SK-N-SH (cell line): ENCODE measurements at regions of chr3 and their contacts with region 1.

Region 1: GRCh38 chr3:137013955-137014688 is 56.3 kb downstream of the IL20RB start:
- DNase-seq: peak; percentile 84
- H3K4me3 ChIP-seq: peak overlapping the region in 1 of 2 experiments; percentile 42; a peak in 2 of 4 replicates
- H3K27ac ChIP-seq: no peak overlapping the region
- H3K4me1 ChIP-seq: peaks cover 5 to 7% of the 10 kb centered on the region in 2 experiments; a peak in 2 of 4 replicates
- H3K27me3 ChIP-seq: no peaks in the 10 kb centered on the region
- CTCF ChIP-seq: peak; percentile 86
- EP300 ChIP-seq: no peak
- RAD21 ChIP-seq: peak; percentile 99

Region 2: GRCh38 chr3:136075218-136075808 is 938.8 kb before region 1 on chr3:
- CTCF ChIA-PET with region 1: interaction called, 28 read pairs
- POLR2A ChIA-PET with region 1: no interaction called
- DNase-seq: peak; percentile 53
- H3K4me3 ChIP-seq: no peak overlapping the region
- H3K27ac ChIP-seq: peak overlapping the region in 1 of 2 experiments; percentile 66; a peak in 2 of 4 replicates
- H3K4me1 ChIP-seq: peaks cover 7 to 10% of the 10 kb centered on the region in 2 experiments
- H3K27me3 ChIP-seq: no peaks in the 10 kb centered on the region
- CTCF ChIP-seq: peak; percentile 93
- EP300 ChIP-seq: no peak
- RAD21 ChIP-seq: peak; percentile 99

Region 3: DNA sequence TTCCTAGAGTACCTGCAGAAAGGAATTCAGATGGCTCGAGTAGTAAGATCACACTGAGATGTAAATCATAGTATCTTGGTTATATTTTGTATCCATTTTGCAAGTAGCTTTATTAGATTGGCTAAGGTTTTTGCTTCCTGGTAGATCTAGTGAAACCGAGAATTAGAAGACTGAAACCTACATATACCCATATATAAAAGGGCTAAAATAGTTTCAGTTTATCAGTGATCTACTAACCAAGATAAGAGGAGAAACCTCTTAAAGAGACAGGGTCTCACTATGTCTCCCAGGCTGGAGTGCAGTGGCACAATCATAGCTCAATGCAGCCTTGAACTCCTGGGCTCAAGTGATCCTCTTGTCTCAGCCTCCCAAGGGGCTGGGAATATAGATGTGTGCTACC is 628.7 kb before region 1 on chr3:
- CTCF ChIA-PET with region 1: interaction called, 49 read pairs
- POLR2A ChIA-PET with region 1: no interaction called
- DNase-seq: no peak
- H3K4me3 ChIP-seq: no peak overlapping the region
- H3K27ac ChIP-seq: no peak overlapping the region
- H3K4me1 ChIP-seq: no peaks in the 10 kb centered on the region
- H3K27me3 ChIP-seq: no peaks in the 10 kb centered on the region
- CTCF ChIP-seq: no peak
- EP300 ChIP-seq: no peak
- RAD21 ChIP-seq: no peak

Region 4: DNA sequence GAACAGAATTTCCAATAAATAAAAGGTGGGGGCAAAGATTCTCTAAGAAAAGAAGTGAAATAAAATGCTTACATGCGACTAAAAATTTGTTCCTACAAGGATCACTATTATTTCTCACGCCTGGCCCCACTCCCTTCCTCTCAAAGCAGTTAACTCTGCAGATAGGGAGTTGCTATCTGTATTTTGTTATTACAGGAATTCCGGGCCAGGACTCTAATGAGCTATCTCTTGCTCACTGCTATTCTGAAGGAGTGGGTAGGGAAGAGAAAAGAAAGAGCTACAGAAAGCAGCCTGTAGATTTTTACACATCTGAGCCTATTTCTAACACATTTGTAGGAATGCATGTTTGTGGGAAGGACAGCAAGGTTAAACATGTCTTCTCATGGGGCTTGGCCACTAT is 623.5 kb before region 1 on chr3:
- CTCF ChIA-PET with region 1: interaction called, 49 read pairs
- POLR2A ChIA-PET with region 1: interaction called, 3 read pairs
- DNase-seq: no peak
- H3K4me3 ChIP-seq: no peak overlapping the region
- H3K27ac ChIP-seq: no peak overlapping the region
- H3K4me1 ChIP-seq: no peaks in the 10 kb centered on the region
- H3K27me3 ChIP-seq: no peaks in the 10 kb centered on the region
- CTCF ChIP-seq: no peak
- EP300 ChIP-seq: no peak
- RAD21 ChIP-seq: no peak

Region 5: GRCh38 chr3:136994772-136995516 is 19.2 kb before region 1 on chr3:
- CTCF ChIA-PET with region 1: interaction called, 10 read pairs
- POLR2A ChIA-PET with region 1: interaction called, 3 read pairs
- DNase-seq: peak; percentile 32
- H3K4me3 ChIP-seq: no peak overlapping the region
- H3K27ac ChIP-seq: peak overlapping the region in 1 of 2 experiments; percentile 35; a peak in 1 of 4 replicates
- H3K4me1 ChIP-seq: peaks cover 10 to 13% of the 10 kb centered on the region in 2 experiments; a peak in 2 of 4 replicates
- H3K27me3 ChIP-seq: no peaks in the 10 kb centered on the region
- CTCF ChIP-seq: no peak
- EP300 ChIP-seq: no peak; a peak in 1 of 4 replicates
- RAD21 ChIP-seq: no peak